KBM-7 (cell line): ENCODE measurements at regions of chr19 and their contacts with region 1.

Region 1: DNA sequence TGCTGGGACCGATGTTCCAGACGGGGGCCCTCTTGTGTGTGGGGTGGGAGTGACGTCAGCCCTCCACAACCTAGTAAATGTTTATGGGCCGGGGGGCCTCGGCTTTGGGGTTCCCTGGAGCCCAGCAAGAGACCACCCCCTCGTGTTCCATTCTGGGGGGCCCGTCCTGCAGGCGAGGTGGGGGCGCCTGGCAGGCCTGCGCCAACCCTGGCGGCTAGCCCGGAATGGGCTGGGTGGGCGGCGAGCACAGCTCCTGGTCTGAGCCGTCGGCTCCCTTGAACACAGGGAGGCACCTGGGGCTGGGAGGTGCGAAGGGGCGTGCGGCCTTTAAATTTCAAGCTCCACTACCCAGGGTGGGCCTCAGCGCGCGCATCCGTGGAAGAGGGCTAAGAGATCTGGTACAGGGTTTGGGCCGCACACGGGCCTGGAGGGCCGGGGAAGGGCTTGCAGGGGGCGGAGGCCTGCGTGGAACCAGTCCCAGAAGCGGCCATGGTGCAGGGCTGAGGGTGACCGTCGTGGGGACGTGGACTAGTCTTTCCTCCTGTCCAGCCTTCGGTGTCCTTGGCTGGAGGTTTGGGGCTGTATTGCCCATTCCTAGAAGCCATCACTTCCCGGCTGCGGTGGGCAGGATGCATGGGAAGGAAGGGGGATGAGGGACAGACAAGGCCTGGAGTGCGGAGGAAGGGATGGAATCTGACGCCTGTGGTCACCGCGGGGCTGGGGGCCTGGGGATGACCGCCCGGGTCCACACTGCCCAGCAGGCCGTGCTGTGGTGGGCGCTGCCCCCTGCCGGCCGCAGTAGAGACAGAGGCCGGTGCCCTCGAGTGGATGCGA is 11.4 kb downstream of the NDUFA11 start:
- DNase-seq: peak; percentile 50

Region 2: GRCh38 chr19:5547881-5548280 is 344.3 kb before region 1 on chr19:
- in situ Hi-C with region 1: no loop called
- DNase-seq: peak; percentile 72

Region 3: GRCh38 chr19:5803752-5804515 is 88.2 kb before region 1 on chr19:
- in situ Hi-C with region 1: loop called (anchors 10 kb)
- DNase-seq: peak; percentile 97

Region 4: GRCh38 chr19:5934774-5935472 is 42.8 kb after region 1 on chr19:
- in situ Hi-C with region 1: no loop called
- DNase-seq: no peak